ENCODE measurements at regions of chr11 and their contacts with region 1.

Region 1: GRCh38 chr11:76807206-76807875 is 24.2 kb downstream of the TSKU start:
- DNase-seq: peak; percentile 91
- ATAC-seq: peak; percentile 31
- H3K4me3 Mint-ChIP-seq: no peak overlapping the region
- H3K27ac Mint-ChIP-seq: no peak overlapping the region
- H3K4me1 Mint-ChIP-seq: peaks cover 32% of the 10 kb centered on the region
- H3K27me3 Mint-ChIP-seq: peaks cover 3% of the 10 kb centered on the region
- CTCF ChIP-seq: peak; percentile 76

Region 2: GRCh38 chr11:76734456-76735420 is 72.6 kb before region 1 on chr11:
- CTCF ChIA-PET with region 1: interaction called, 238 read pairs
- POLR2A ChIA-PET with region 1: no interaction called
- intact Hi-C with region 1: loop called (anchors 5 kb)
- DNase-seq: no peak
- ATAC-seq: no peak
- H3K4me3 Mint-ChIP-seq: no peak overlapping the region
- H3K27ac Mint-ChIP-seq: no peak overlapping the region
- H3K4me1 Mint-ChIP-seq: no peaks in the 10 kb centered on the region
- H3K27me3 Mint-ChIP-seq: no peaks in the 10 kb centered on the region
- CTCF ChIP-seq: no peak

Region 3: GRCh38 chr11:76823481-76824078 is 16.2 kb after region 1 on chr11:
- CTCF ChIA-PET with region 1: interaction called, 18 read pairs
- POLR2A ChIA-PET with region 1: no interaction called
- intact Hi-C with region 1: no loop called
- DNase-seq: no peak
- ATAC-seq: no peak
- H3K4me3 Mint-ChIP-seq: no peak overlapping the region
- H3K27ac Mint-ChIP-seq: no peak overlapping the region
- H3K4me1 Mint-ChIP-seq: peaks cover 10% of the 10 kb centered on the region
- H3K27me3 Mint-ChIP-seq: peaks cover 2% of the 10 kb centered on the region
- CTCF ChIP-seq: no peak

Measured in activated CD8-positive, alpha-beta T cell treated with anti-CD3 and anti-CD28 coated beads for 36 hours (primary cell).